SK-N-SH (cell line): ENCODE measurements at regions of chr19 and their contacts with region 1.

Region 1: GRCh38 chr19:7680606-7681339 is at the start of gene TRAPPC5:
- DNase-seq: peak; percentile 98
- H3K4me3 ChIP-seq: peak within 1 kb of the TSS; percentile 87 to 92
- H3K27ac ChIP-seq: peak within 1 kb of the TSS in 1 of 2 experiments; percentile 72; a peak in 1 of 4 replicates
- H3K4me1 ChIP-seq: peaks cover 0 to 13% of the 10 kb centered on the region in 2 experiments; a peak in 1 of 4 replicates
- H3K27me3 ChIP-seq: peaks cover 28% of the 10 kb centered on the region
- CTCF ChIP-seq: peak; percentile 87
- EP300 ChIP-seq: no peak
- RAD21 ChIP-seq: peak; percentile 82
- polyA plus RNA-seq, gene TRAPPC5: 44.1 and 49.4 TPM in 2 replicates

Region 2: GRCh38 chr19:7575434-7576040 is 105.2 kb before region 1 on chr19:
- CTCF ChIA-PET with region 1: interaction called, 171 read pairs
- POLR2A ChIA-PET with region 1: no interaction called
- DNase-seq: no peak
- H3K4me3 ChIP-seq: no peak overlapping the region
- H3K27ac ChIP-seq: no peak overlapping the region
- H3K4me1 ChIP-seq: no peaks in the 10 kb centered on the region
- H3K27me3 ChIP-seq: peaks cover 42% of the 10 kb centered on the region
- CTCF ChIP-seq: no peak
- EP300 ChIP-seq: no peak
- RAD21 ChIP-seq: no peak

Region 3: DNA sequence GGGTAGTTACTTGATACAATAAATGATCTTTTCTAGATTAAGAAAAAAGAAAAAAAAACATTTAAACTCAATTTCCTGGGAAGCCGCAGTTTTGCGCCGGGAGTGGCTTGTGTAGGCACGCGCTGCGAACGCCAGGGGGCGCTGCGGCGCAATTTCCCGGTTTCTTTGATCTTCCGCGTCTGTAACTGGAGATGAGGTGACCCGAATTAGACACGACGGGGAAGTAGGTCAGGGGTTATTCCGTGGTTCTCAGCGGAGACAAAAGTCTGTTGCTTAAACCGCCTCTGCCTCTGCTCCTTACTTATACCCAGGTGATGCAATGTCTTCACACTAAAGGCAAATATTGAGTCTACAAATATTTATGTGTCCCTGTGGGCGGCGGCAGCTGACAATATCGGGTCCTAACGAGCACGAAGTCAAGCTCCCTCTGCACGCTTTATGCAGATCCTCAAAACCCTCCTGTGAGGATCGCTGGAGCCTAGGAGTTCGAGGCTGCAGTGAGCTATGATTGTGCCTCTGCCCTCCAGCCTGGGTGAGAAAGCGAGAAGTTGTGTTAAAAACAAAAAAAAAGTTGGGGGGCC is 28.6 kb before region 1 on chr19:
- CTCF ChIA-PET with region 1: interaction called, 13 read pairs
- POLR2A ChIA-PET with region 1: no interaction called
- DNase-seq: peak; percentile 89
- H3K4me3 ChIP-seq: peak overlapping the region; percentile 23 to 61; a peak in 3 of 4 replicates
- H3K27ac ChIP-seq: no peak overlapping the region
- H3K4me1 ChIP-seq: peaks cover 0 to 3% of the 10 kb centered on the region in 2 experiments; a peak in 1 of 4 replicates
- H3K27me3 ChIP-seq: peaks cover 34% of the 10 kb centered on the region
- CTCF ChIP-seq: peak; percentile 99
- EP300 ChIP-seq: no peak
- RAD21 ChIP-seq: peak; percentile 62

Region 4: GRCh38 chr19:7690779-7691258 is 10.0 kb after region 1 on chr19:
- CTCF ChIA-PET with region 1: interaction called, 12 read pairs
- POLR2A ChIA-PET with region 1: no interaction called
- DNase-seq: no peak
- H3K4me3 ChIP-seq: no peak overlapping the region
- H3K27ac ChIP-seq: no peak overlapping the region
- H3K4me1 ChIP-seq: no peaks in the 10 kb centered on the region
- H3K27me3 ChIP-seq: peaks cover 47% of the 10 kb centered on the region
- CTCF ChIP-seq: no peak
- EP300 ChIP-seq: no peak
- RAD21 ChIP-seq: no peak